ENCODE measurements at regions of chr16 and their contacts with region 1.

Region 1: DNA sequence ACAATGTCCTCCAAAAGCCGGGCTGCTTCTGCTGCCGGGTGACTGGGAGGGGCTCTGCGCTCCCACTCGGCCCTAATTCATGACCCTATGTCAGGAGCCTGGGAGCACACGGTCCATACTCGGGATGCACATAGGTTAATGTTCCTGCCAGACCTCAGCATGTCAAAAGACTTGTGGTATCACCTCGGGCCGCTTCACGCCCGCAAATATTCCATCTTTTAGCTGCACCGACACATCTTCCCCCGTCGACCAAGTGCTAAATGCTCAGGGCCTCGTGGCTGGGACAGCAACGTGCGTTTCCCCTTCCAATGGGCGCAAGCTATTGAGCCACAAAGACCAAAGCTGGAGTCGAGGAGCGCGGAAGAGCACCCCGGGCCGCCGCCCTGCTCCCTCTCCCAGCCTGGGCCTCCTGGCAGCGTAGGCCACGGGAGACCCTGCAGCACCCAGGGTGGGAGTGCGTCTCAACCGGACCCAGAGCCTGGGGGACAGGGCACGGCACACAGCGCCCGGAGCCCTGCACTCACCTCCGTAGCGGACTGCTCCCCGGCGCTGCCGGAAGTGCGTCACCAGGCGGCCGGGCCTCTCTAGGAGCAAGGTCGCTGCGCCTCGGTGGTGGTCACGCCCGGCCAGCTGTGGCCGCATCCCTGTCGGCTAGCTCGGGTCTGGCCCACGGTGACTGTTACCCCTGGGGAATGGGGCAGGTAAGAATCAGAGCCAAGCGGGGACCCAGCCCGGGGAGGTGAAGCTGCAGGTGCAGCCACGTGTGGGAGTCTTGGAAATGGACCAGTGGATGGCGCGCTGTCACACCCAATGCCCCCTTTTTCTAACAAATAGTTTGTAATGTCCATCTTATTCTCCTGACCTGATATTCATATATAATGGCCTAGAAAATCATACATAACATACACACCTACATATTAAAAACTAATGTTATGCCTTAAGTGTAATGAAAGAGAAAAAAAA is at the start of gene ZNF23:
- DNase-seq: peak; percentile 82 to 89
- ATAC-seq: peak; percentile 99 to 100 (median 99)
- H3K4me3 ChIP-seq: peak within 1 kb of the TSS; percentile 70 to 99 (median 92)
- H3K27ac ChIP-seq: peak within 1 kb of the TSS; percentile 59 to 92 (median 88)
- H3K4me1 ChIP-seq: peaks cover 0 to 28% (median 18%) of the 10 kb centered on the region in 9 donors
- H3K27me3 ChIP-seq: no peaks in the 10 kb centered on the region
- CTCF ChIP-seq: peak in 1 of 9 donors; percentile 5
- total RNA-seq, gene ZNF23: 4.7 to 6.9 (median 5.8) TPM

Region 2: DNA sequence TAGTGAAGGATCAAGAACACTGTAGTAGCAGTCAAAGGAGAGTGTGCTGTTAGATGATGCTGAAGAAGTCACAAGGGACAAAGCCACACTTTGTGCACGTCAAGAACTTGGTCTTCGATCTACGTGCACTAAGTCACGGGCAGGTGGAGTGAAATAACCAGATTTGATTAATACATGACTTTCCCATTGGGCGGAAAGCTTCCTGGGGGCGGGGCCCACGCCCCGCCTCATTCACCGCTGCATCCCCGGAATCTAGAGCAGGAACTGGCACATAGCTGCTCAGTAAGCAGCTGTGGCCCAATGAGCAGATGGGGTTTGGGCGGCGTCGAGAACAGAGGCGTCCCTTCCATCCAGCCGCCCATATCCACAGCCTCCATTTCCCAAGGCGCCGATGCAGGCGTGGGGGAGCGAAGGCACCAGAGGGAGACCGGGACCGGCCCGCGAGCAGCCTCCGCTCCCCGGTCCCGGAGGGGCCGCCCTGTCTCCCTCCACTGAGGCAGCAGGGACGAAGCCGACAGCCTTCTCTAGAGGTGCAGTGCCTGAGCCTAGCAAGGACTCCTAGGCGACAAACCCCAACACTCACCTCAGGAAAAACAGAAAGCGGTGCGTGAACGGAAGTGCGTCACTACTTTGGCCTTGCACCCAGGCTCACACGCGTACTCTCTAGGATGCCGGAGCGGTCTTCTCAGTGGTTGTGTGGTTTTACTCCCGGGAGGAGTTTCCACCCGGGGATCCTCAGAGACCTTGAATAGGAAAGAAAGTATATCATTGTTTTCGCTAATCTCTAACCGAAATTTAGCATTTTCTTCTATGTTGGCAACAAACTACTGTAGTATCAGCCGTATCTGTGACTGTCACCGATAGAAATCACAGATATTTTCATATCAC is 22.3 kb after region 1 on chr16:
- intact Hi-C with region 1: loop called in 7 of 10 experiments (anchors 1 to 2 kb)
- DNase-seq: peak; percentile 78 to 90
- ATAC-seq: peak; percentile 96 to 99 (median 98)
- H3K4me3 ChIP-seq: peak overlapping the region; percentile 61 to 99 (median 78)
- H3K27ac ChIP-seq: peak overlapping the region; percentile 79 to 99 (median 94)
- H3K4me1 ChIP-seq: peaks cover 0 to 14% (median 10%) of the 10 kb centered on the region in 9 donors
- H3K27me3 ChIP-seq: no peaks in the 10 kb centered on the region
- CTCF ChIP-seq: no peak

Measured in heart right ventricle (tissue), 16 donors.